T-cell (primary cell): ENCODE measurements at regions of chr12 and their contacts with region 1.

Region 1: GRCh38 chr12:108846290-108846701 is 11.1 kb downstream of the SSH1 start:
- DNase-seq: no peak
- ATAC-seq: no peak
- H3K4me3 ChIP-seq: no peak overlapping the region
- H3K4me3 Mint-ChIP-seq: no peak overlapping the region
- H3K27ac ChIP-seq: no peak overlapping the region
- H3K27ac Mint-ChIP-seq: no peak overlapping the region
- H3K4me1 ChIP-seq: no peaks in the 10 kb centered on the region
- H3K4me1 Mint-ChIP-seq: peaks cover 0 to 5% (median 4%) of the 10 kb centered on the region in 3 donors
- H3K27me3 ChIP-seq: no peaks in the 10 kb centered on the region
- H3K27me3 Mint-ChIP-seq: no peaks in the 10 kb centered on the region

Region 2: GRCh38 chr12:108816652-108817335 is 29.5 kb before region 1 on chr12:
- CTCF ChIA-PET with region 1: no interaction called
- POLR2A ChIA-PET with region 1: no interaction called
- DNase-seq: no peak
- ATAC-seq: no peak
- H3K4me3 ChIP-seq: no peak overlapping the region
- H3K4me3 Mint-ChIP-seq: no peak overlapping the region
- H3K27ac ChIP-seq: no peak overlapping the region
- H3K27ac Mint-ChIP-seq: no peak overlapping the region
- H3K4me1 ChIP-seq: no peaks in the 10 kb centered on the region
- H3K4me1 Mint-ChIP-seq: peaks cover 0 to 2% (median 2%) of the 10 kb centered on the region in 3 donors
- H3K27me3 ChIP-seq: no peaks in the 10 kb centered on the region
- H3K27me3 Mint-ChIP-seq: no peaks in the 10 kb centered on the region

Region 3: DNA sequence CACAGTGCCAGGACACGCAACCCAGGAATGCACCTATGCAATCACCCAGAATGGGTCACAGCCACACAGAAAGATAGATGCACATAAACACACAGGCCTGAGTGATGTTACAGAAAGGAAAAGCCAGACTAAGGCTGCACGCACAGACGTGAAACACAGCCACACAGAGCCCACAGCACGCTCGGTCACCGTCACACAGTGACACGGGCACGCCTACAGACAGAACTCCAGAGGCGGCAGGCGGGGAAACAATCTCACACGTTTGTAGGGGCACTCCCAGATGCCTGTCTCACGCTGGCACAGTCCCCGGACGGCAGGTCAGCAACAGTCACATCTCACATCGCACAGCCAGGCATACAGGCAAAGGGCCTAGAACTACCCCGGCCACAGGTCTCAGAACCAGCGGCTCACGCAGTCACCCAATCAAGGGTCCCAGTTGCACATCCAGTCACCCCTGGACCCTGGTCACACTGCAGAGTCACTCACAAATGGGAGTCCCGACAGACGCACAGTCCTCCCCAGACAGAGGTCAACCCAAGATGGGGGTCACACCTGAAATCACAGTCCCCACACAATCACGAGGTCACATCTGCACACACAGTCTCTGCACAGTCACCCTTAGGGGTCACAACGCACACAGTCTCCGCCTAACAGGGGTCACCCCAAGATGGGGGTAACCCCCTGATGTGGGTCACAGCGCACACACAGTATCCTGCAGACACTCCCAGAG is 10.3 kb after region 1 on chr12:
- CTCF ChIA-PET with region 1: no interaction called
- POLR2A ChIA-PET with region 1: interaction called in 1 of 2 experiments, 13 read pairs
- DNase-seq: peak; percentile 20 to 84 (median 58)
- ATAC-seq: peak; percentile 26 to 64 (median 30)
- H3K4me3 ChIP-seq: peak overlapping the region; percentile 58 to 84
- H3K4me3 Mint-ChIP-seq: peak overlapping the region; percentile 88 to 96 (median 91)
- H3K27ac ChIP-seq: peak overlapping the region; percentile 59
- H3K27ac Mint-ChIP-seq: peak overlapping the region; percentile 78 to 92
- H3K4me1 ChIP-seq: peaks cover 15 to 28% of the 10 kb centered on the region in 2 experiments
- H3K4me1 Mint-ChIP-seq: peaks cover 42 to 58% (median 45%) of the 10 kb centered on the region in 3 donors
- H3K27me3 ChIP-seq: peaks cover 0 to 7% of the 10 kb centered on the region in 2 experiments
- H3K27me3 Mint-ChIP-seq: no peaks in the 10 kb centered on the region